ENCODE measurements at regions of chr2 and their contacts with region 1.

Region 1: GRCh38 chr2:190507135-190507534 is 27.4 kb downstream of the NEMP2 start:
- DNase-seq: no peak
- ATAC-seq: no peak
- H3K4me3 ChIP-seq: no peak overlapping the region
- H3K27ac ChIP-seq: no peak overlapping the region
- H3K4me1 ChIP-seq: no peaks in the 10 kb centered on the region
- H3K27me3 ChIP-seq: no peaks in the 10 kb centered on the region

Region 2: GRCh38 chr2:189900726-189901125 is 606.4 kb before region 1 on chr2:
- intact Hi-C with region 1: no loop called
- DNase-seq: no peak
- ATAC-seq: no peak
- H3K4me3 ChIP-seq: no peak overlapping the region
- H3K27ac ChIP-seq: no peak overlapping the region
- H3K4me1 ChIP-seq: no peaks in the 10 kb centered on the region
- H3K27me3 ChIP-seq: no peaks in the 10 kb centered on the region

Region 3: GRCh38 chr2:190387422-190387821 is 119.7 kb before region 1 on chr2:
- intact Hi-C with region 1: loop called in 1 of 4 experiments (anchors 5 kb)
- DNase-seq: no peak
- ATAC-seq: no peak
- H3K4me3 ChIP-seq: no peak overlapping the region
- H3K27ac ChIP-seq: no peak overlapping the region
- H3K4me1 ChIP-seq: no peaks in the 10 kb centered on the region
- H3K27me3 ChIP-seq: no peaks in the 10 kb centered on the region

Region 4: DNA sequence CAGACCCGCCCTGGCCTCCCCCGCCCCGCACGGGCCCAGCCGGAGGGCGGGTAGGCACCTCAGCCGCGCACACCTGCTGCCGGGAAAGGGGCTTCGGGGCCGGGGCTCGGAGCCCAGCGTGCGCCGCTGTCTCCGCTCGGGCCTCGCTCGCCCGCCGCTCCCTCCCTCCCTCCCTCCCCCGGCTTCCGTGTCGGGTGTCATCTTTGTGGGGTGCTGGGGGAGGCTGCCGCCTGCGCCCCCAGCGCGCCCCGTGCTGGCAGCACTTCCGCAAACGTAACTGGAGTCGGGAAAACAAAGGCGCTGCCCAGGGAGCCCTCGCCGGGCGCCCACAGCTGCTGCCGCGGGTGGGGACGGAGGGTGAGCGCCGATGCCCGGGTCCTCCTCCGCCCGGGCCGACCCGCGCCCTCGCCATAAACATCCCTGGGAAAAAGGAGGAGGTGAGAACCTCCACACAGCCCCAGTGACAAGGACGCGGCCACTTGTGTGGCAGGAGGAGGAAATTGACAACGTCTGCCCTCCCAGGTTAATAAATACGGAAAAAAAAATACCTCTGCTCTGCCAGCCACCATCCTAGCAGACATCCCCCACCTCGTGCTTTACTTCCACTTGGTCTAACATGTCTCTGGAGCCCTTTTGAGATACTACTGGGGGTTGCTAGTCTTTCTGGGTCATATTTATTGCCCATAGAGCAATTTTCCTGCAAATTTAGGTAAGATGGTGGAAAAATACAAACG is 98.4 kb before region 1 on chr2:
- intact Hi-C with region 1: loop called in 2 of 4 experiments (anchors 10 kb)
- DNase-seq: peak; percentile 49 to 82 (median 77)
- ATAC-seq: peak; percentile 56 to 63
- H3K4me3 ChIP-seq: peak overlapping the region; percentile 92
- H3K27ac ChIP-seq: peak overlapping the region; percentile 58
- H3K4me1 ChIP-seq: no peaks in the 10 kb centered on the region
- H3K27me3 ChIP-seq: no peaks in the 10 kb centered on the region

Measured in right cardiac atrium (tissue), 5 donors.